Ovary (tissue), 10 donors: ENCODE measurements at regions of chr17 and their contacts with region 1.

Region 1: GRCh38 chr17:8481116-8481518 is 45.4 kb downstream of the NDEL1 start:
- DNase-seq: no peak
- H3K4me3 ChIP-seq: no peak overlapping the region
- H3K27ac ChIP-seq: peak overlapping the region in 1 of 2 donors; percentile 4
- H3K4me1 ChIP-seq: peaks cover 22% of the 10 kb centered on the region
- H3K27me3 ChIP-seq: no peaks in the 10 kb centered on the region
- CTCF ChIP-seq: no peak
- EP300 ChIP-seq: no peak
- POLR2A ChIP-seq: no peak

Region 2: DNA sequence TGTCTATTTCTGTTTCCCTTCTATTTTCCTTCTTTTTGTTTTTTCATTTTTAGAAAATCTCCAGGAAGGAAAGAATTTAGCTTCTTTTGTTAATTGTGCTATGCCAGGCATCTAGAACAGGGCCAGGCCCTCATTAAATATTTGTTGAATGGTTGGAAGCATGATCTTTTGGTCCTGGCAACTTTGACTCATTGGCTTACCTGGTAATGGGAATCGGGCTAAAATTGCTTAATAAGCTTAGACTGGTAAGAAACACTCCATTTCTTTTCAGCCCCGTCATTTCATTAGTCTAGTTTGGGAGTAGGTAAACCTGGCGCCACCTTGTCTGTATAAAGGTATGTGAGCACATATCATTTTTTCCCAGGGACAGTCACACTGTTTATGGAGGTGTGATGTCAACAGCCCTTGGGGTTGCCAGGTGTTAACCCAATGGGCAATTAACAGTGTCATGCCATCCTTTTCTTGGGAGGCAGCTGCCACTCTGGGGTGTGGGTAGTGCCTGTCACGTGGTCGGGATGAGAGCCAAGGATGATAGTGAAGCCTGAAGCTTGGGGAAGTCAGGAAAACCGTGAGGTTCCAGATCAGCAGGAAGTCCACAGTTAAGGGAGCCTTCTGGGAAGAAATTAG is 54.9 kb before region 1 on chr17:
- intact Hi-C with region 1: loop called in 1 of 4 experiments (anchors 5 kb)
- DNase-seq: no peak
- H3K4me3 ChIP-seq: no peak overlapping the region
- H3K27ac ChIP-seq: no peak overlapping the region
- H3K4me1 ChIP-seq: no peaks in the 10 kb centered on the region
- H3K27me3 ChIP-seq: no peaks in the 10 kb centered on the region
- CTCF ChIP-seq: no peak
- EP300 ChIP-seq: no peak
- POLR2A ChIP-seq: no peak